Caco-2 (cell line): ENCODE measurements at regions of chr15 and their contacts with region 1.

Region 1: GRCh38 chr15:40928821-40929659 is at the start of gene DLL4:
- DNase-seq: peak; percentile 93 to 94
- H3K4me3 ChIP-seq: peak within 1 kb of the TSS; percentile 65
- H3K4me3 Mint-ChIP-seq: peak within 1 kb of the TSS; percentile 84
- H3K27ac Mint-ChIP-seq: peak within 1 kb of the TSS; percentile 88
- H3K4me1 ChIP-seq: peaks cover 34% of the 10 kb centered on the region
- H3K4me1 Mint-ChIP-seq: peaks cover 35% of the 10 kb centered on the region
- H3K27me3 ChIP-seq: no peaks in the 10 kb centered on the region
- H3K27me3 Mint-ChIP-seq: no peaks in the 10 kb centered on the region
- CTCF ChIP-seq: peak in 1 of 2 experiments; percentile 4
- total RNA-seq, gene DLL4: 3.4 TPM in 2 replicates

Region 2: GRCh38 chr15:40867200-40867599 is 61.8 kb before region 1 on chr15:
- CTCF ChIA-PET with region 1: no interaction called
- POLR2A ChIA-PET with region 1: no interaction called
- intact Hi-C with region 1: no loop called
- DNase-seq: no peak
- H3K4me3 ChIP-seq: no peak overlapping the region
- H3K4me3 Mint-ChIP-seq: no peak overlapping the region
- H3K27ac Mint-ChIP-seq: no peak overlapping the region
- H3K4me1 ChIP-seq: peaks cover 14% of the 10 kb centered on the region
- H3K4me1 Mint-ChIP-seq: peaks cover 9% of the 10 kb centered on the region
- H3K27me3 ChIP-seq: no peaks in the 10 kb centered on the region
- H3K27me3 Mint-ChIP-seq: no peaks in the 10 kb centered on the region
- CTCF ChIP-seq: no peak

Region 3: GRCh38 chr15:40906091-40906990 is 22.7 kb before region 1 on chr15:
- CTCF ChIA-PET with region 1: interaction called, 20 read pairs
- POLR2A ChIA-PET with region 1: interaction called, 12 read pairs
- intact Hi-C with region 1: loop called (anchors 1 kb)
- DNase-seq: peak; percentile 88 to 92
- H3K4me3 ChIP-seq: peak overlapping the region; percentile 16; the same call in 1 of the 2 replicates
- H3K4me3 Mint-ChIP-seq: no peak overlapping the region
- H3K27ac Mint-ChIP-seq: peak overlapping the region; percentile 35
- H3K4me1 ChIP-seq: peaks cover 28% of the 10 kb centered on the region
- H3K4me1 Mint-ChIP-seq: peaks cover 12% of the 10 kb centered on the region
- H3K27me3 ChIP-seq: no peaks in the 10 kb centered on the region
- H3K27me3 Mint-ChIP-seq: no peaks in the 10 kb centered on the region
- CTCF ChIP-seq: peak; percentile 86 to 89

Region 4: DNA sequence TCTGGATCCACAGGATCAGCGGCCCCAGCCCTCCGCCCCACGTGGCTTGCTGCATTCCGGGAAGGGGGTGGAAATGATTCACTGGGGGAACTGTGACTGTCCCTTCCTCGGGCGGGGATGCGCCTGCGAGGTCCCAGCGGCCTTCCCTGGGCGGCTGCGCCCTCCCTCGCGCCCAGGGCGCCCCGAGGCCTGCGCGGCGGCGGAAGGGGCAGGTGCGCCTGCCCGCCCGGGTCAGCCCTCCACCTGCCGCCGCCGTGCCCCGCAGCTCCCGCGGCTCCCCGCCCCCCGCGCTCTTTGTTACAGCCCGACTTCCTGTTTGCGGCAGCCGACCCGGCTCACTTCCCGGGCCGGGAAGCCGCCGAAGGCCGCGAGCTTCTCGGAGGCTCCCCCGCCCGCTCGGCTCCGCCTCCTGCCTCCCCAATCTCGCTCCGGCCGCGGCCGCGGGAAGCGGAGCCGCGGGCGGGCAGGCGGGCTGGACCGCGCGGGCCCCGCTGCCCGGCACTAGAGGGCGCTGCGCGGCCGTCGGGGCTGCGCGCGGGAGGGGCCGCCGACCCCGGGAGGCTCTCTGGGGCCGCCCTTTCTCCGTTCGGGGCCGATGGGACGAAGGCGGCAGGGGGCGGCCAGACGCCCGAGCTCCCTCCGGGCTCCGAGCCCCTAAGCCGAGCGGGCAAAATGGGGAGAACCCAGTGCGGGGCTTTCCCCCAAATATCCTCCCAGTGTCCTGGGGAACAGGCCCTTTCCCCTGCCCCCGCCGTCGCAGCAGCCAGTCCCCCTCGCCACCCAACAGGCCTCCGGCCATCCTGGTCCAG is 12.7 kb after region 1 on chr15:
- CTCF ChIA-PET with region 1: interaction called, 56 read pairs
- POLR2A ChIA-PET with region 1: interaction called, 27 read pairs
- intact Hi-C with region 1: loop called (anchors 1 kb)
- DNase-seq: peak; percentile 86 to 90
- H3K4me3 ChIP-seq: peak overlapping the region; percentile 56
- H3K4me3 Mint-ChIP-seq: peak overlapping the region; percentile 79
- H3K27ac Mint-ChIP-seq: peak overlapping the region; percentile 95
- H3K4me1 ChIP-seq: peaks cover 12% of the 10 kb centered on the region
- H3K4me1 Mint-ChIP-seq: no peaks in the 10 kb centered on the region
- H3K27me3 ChIP-seq: no peaks in the 10 kb centered on the region
- H3K27me3 Mint-ChIP-seq: no peaks in the 10 kb centered on the region
- CTCF ChIP-seq: peak; percentile 16 to 60

Region 5: GRCh38 chr15:41022487-41023090 is 93.5 kb after region 1 on chr15:
- CTCF ChIA-PET with region 1: interaction called, 14 read pairs
- POLR2A ChIA-PET with region 1: no interaction called
- intact Hi-C with region 1: no loop called
- DNase-seq: peak; percentile 45 to 47
- H3K4me3 ChIP-seq: no peak overlapping the region
- H3K4me3 Mint-ChIP-seq: no peak overlapping the region
- H3K27ac Mint-ChIP-seq: no peak overlapping the region
- H3K4me1 ChIP-seq: 0 out of 2 replicates have a peak, but pooled peaks cover 5% of the 10 kb centered on the region
- H3K4me1 Mint-ChIP-seq: no peaks in the 10 kb centered on the region
- H3K27me3 ChIP-seq: no peaks in the 10 kb centered on the region
- H3K27me3 Mint-ChIP-seq: no peaks in the 10 kb centered on the region
- CTCF ChIP-seq: peak; percentile 68 to 78

Region 6: GRCh38 chr15:41340188-41340695 is 411.2 kb after region 1 on chr15:
- CTCF ChIA-PET with region 1: no interaction called
- POLR2A ChIA-PET with region 1: no interaction called
- intact Hi-C with region 1: no loop called
- DNase-seq: no peak
- H3K4me3 ChIP-seq: no peak overlapping the region
- H3K4me3 Mint-ChIP-seq: no peak overlapping the region
- H3K27ac Mint-ChIP-seq: no peak overlapping the region
- H3K4me1 ChIP-seq: no peaks in the 10 kb centered on the region
- H3K4me1 Mint-ChIP-seq: peaks cover 8% of the 10 kb centered on the region
- H3K27me3 ChIP-seq: no peaks in the 10 kb centered on the region
- H3K27me3 Mint-ChIP-seq: no peaks in the 10 kb centered on the region
- CTCF ChIP-seq: no peak